Ovary (tissue), 10 donors: ENCODE measurements at regions of chr11 and their contacts with region 1.

Region 1: GRCh38 chr11:32326522-32326921 is 108.8 kb downstream of the WT1 start:
- DNase-seq: no peak
- H3K4me3 ChIP-seq: no peak overlapping the region
- H3K27ac ChIP-seq: no peak overlapping the region
- H3K4me1 ChIP-seq: no peaks in the 10 kb centered on the region
- H3K27me3 ChIP-seq: no peaks in the 10 kb centered on the region
- CTCF ChIP-seq: no peak
- EP300 ChIP-seq: no peak
- POLR2A ChIP-seq: no peak

Region 2: GRCh38 chr11:32374261-32374711 is 47.8 kb after region 1 on chr11:
- intact Hi-C with region 1: loop called in 1 of 4 experiments (anchors 10 kb)
- DNase-seq: peak in 4 of 5 donors; percentile 35 to 62 (median 48)
- H3K4me3 ChIP-seq: no peak overlapping the region
- H3K27ac ChIP-seq: no peak overlapping the region
- H3K4me1 ChIP-seq: no peaks in the 10 kb centered on the region
- H3K27me3 ChIP-seq: no peaks in the 10 kb centered on the region
- CTCF ChIP-seq: peak in 1 of 3 donors; percentile 6
- EP300 ChIP-seq: no peak
- POLR2A ChIP-seq: no peak

Region 3: DNA sequence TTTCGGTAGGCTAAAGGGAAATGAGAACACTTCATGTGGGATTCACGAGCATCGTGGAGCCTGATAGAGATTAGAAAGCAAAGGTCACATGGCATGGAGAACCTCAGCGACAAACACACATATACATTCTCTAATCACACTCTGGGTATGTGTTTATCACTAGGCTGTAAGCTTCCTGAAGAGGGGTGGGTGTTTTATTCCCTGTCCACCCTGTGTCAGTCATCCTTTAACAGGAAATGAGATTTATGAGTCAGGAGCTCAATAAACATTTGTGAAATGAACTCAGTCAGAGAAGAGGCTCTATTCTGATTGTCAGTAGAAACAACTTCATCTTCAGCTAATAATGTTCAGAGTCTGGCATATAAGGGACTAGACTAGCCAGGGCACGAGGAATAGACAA is 185.4 kb after region 1 on chr11:
- intact Hi-C with region 1: loop called in 1 of 4 experiments (anchors 5 kb)
- DNase-seq: no peak
- H3K4me3 ChIP-seq: no peak overlapping the region
- H3K27ac ChIP-seq: no peak overlapping the region
- H3K4me1 ChIP-seq: peaks cover 2% of the 10 kb centered on the region
- H3K27me3 ChIP-seq: no peaks in the 10 kb centered on the region
- CTCF ChIP-seq: no peak
- EP300 ChIP-seq: no peak
- POLR2A ChIP-seq: no peak

Region 4: DNA sequence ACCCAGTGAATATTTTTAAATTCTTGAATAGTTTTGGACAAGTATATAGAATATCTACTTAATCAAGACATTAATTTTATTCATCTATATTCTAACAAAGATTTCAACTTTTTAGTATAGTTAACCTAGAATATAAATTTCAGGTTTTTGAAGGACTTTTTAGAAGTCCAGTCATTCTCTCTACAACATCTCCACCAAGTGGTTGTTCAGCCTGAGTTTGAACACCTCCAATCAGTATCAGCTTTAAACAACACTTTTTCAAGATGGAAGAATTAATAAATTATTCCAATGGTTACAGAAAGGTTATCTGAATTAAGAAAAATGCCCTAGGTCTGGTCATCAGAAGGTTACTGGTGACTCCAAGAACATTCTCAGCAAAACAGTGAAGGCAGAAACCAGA is 288.9 kb after region 1 on chr11:
- intact Hi-C with region 1: loop called in 3 of 4 experiments (anchors 5 to 10 kb)
- DNase-seq: peak in 1 of 5 donors; percentile 28
- H3K4me3 ChIP-seq: no peak overlapping the region
- H3K27ac ChIP-seq: no peak overlapping the region
- H3K4me1 ChIP-seq: no peaks in the 10 kb centered on the region
- H3K27me3 ChIP-seq: no peaks in the 10 kb centered on the region
- CTCF ChIP-seq: peak in 2 of 3 donors; percentile 49 to 62
- EP300 ChIP-seq: no peak
- POLR2A ChIP-seq: no peak

Region 5: GRCh38 chr11:32792948-32793475 is 466.5 kb after region 1 on chr11:
- intact Hi-C with region 1: loop called in 1 of 4 experiments (anchors 2 kb)
- DNase-seq: peak; percentile 18 to 66 (median 57)
- H3K4me3 ChIP-seq: no peak overlapping the region
- H3K27ac ChIP-seq: no peak overlapping the region
- H3K4me1 ChIP-seq: no peaks in the 10 kb centered on the region
- H3K27me3 ChIP-seq: no peaks in the 10 kb centered on the region
- CTCF ChIP-seq: peak; percentile 24 to 65 (median 58)
- EP300 ChIP-seq: no peak
- POLR2A ChIP-seq: no peak